A549 (cell line): ENCODE measurements at regions of chr20 and their contacts with region 1.

Region 1: GRCh38 chr20:31849455-31849925 is 4.1 kb upstream of the FOXS1 start:
- DNase-seq: no peak
- ATAC-seq: no peak
- H3K4me3 ChIP-seq: no peak overlapping the region
- H3K27ac ChIP-seq: no peak overlapping the region
- H3K4me1 ChIP-seq: peaks cover 17% of the 10 kb centered on the region
- CTCF ChIP-seq: no peak
- EP300 ChIP-seq: no peak
- POLR2A ChIP-seq: no peak
- RAD21 ChIP-seq: no peak

Region 2: DNA sequence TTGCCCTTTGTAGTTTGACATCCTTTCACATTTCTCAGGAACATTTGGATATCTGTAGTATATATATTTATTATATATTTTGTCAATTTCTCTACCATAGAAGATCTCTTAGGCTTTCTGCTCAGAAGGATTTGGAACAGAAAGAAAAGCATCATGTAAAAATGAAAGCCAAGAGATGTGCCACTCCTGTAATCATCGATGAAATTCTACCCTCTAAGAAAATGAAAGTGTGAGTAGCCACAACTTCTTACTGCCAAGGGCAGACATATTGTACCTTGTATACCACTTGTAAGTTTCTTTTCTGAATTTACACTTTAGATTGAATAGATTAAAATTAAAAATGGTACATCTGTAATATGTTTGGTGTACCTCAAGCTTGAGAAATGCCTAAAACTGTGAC is 79.2 kb before region 1 on chr20:
- CTCF ChIA-PET with region 1: no interaction called
- POLR2A ChIA-PET with region 1: no interaction called
- DNase-seq: no peak
- ATAC-seq: no peak
- H3K4me3 ChIP-seq: no peak overlapping the region
- H3K27ac ChIP-seq: no peak overlapping the region
- H3K4me1 ChIP-seq: no peaks in the 10 kb centered on the region
- CTCF ChIP-seq: no peak
- EP300 ChIP-seq: no peak
- POLR2A ChIP-seq: no peak
- RAD21 ChIP-seq: no peak

Region 3: GRCh38 chr20:31822421-31823330 is 26.8 kb before region 1 on chr20:
- CTCF ChIA-PET with region 1: interaction called, 125 read pairs
- POLR2A ChIA-PET with region 1: no interaction called
- DNase-seq: peak; percentile 62 to 79
- ATAC-seq: peak; percentile 71 to 90
- H3K4me3 ChIP-seq: 0 out of 3 replicates have a peak overlapping the region, but pooled peaks have one; percentile 18
- H3K27ac ChIP-seq: peak overlapping the region; percentile 16 to 68; a peak in 4 of 6 replicates
- H3K4me1 ChIP-seq: peaks cover 23% of the 10 kb centered on the region; the same call in 2 of the 3 replicates
- CTCF ChIP-seq: peak; percentile 97
- EP300 ChIP-seq: no peak
- POLR2A ChIP-seq: no peak
- RAD21 ChIP-seq: peak; percentile 97 to 99

Region 4: DNA sequence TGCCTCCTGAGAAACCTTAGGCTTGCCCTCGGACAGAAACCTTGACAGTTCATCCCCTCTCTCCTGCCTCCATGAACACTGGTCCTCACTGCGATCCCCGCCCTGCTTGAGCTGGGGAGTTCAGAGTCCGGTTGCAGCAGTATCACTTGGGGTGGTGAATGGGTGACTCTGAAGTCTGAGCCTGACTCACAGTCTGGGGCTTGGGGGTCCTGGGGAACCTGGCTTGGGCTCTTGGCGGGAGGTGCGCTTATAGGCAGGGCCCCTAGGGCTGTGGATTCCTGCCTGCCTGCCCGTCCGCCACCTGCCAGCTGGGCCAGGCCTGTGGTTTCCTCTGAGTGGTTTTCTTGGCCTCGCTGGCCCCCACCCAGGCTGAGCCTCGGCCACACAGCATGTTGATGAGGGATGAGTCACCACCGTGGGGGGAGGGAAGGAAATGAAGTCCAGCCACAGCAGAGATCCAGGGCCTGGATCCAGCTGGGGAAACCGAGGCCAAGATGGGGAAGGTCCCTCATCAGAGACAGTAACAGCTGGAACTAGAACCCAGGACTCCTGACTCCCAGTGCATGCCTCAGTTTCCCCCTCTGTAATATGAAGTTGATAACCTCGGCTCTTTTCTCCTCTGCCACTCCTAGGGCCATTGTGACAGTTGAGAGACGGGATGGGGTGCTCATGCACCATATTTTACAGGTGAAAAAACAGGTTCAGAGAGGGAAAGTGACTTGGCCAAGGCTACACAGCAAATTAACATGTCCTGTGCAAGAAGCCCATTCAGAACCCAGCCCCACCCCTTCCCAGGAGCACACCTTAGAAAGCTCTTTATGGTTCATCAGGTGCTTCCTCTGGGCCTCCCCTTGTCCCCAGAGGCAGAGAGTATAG is 13.3 kb before region 1 on chr20:
- CTCF ChIA-PET with region 1: interaction called, 145 read pairs
- POLR2A ChIA-PET with region 1: interaction called, 5 read pairs
- DNase-seq: peak; percentile 56 to 72
- ATAC-seq: peak; percentile 55 to 63
- H3K4me3 ChIP-seq: no peak overlapping the region
- H3K27ac ChIP-seq: peak overlapping the region; percentile 84 to 86
- H3K4me1 ChIP-seq: peaks cover 69% of the 10 kb centered on the region
- CTCF ChIP-seq: no peak
- EP300 ChIP-seq: peak; percentile 17 to 47; a peak in 2 of 5 replicates
- POLR2A ChIP-seq: no peak
- RAD21 ChIP-seq: no peak

Region 5: GRCh38 chr20:31869942-31870725 is 20.6 kb after region 1 on chr20 and contains the starts of genes DUSP15 and TTLL9:
- CTCF ChIA-PET with region 1: interaction called, 64 read pairs
- POLR2A ChIA-PET with region 1: no interaction called
- DNase-seq: no peak
- ATAC-seq: peak; percentile 66 to 83
- H3K4me3 ChIP-seq: peak within 1 kb of the TSS; percentile 70
- H3K27ac ChIP-seq: peak within 1 kb of the TSS; percentile 66 to 90
- H3K4me1 ChIP-seq: peaks cover 12% of the 10 kb centered on the region; the same call in 2 of the 3 replicates
- CTCF ChIP-seq: no peak
- EP300 ChIP-seq: no peak
- POLR2A ChIP-seq: no peak; the same call in 1 of the 2 replicates
- RAD21 ChIP-seq: no peak
- polyA plus RNA-seq, gene DUSP15: 0.46 and 0.53 TPM in 2 replicates
- polyA plus RNA-seq, gene TTLL9: 0.06 and 0.08 TPM in 2 replicates

Region 6: GRCh38 chr20:31951530-31952453 is 102.3 kb after region 1 on chr20 and contains the start of gene PDRG1:
- CTCF ChIA-PET with region 1: interaction called, 173 read pairs
- POLR2A ChIA-PET with region 1: interaction called, 4 read pairs
- DNase-seq: peak; percentile 72 to 96
- ATAC-seq: peak; percentile 89 to 99
- H3K4me3 ChIP-seq: peak within 1 kb of the TSS; percentile 100
- H3K27ac ChIP-seq: peak within 1 kb of the TSS; percentile 92 to 97
- H3K4me1 ChIP-seq: peaks cover 8% of the 10 kb centered on the region; the same call in 2 of the 3 replicates
- CTCF ChIP-seq: peak; percentile 96
- EP300 ChIP-seq: no peak
- POLR2A ChIP-seq: peak; percentile 85
- RAD21 ChIP-seq: peak; percentile 77 to 89
- polyA plus RNA-seq, gene PDRG1: 15.3 and 20.7 TPM in 2 replicates

Region 7: DNA sequence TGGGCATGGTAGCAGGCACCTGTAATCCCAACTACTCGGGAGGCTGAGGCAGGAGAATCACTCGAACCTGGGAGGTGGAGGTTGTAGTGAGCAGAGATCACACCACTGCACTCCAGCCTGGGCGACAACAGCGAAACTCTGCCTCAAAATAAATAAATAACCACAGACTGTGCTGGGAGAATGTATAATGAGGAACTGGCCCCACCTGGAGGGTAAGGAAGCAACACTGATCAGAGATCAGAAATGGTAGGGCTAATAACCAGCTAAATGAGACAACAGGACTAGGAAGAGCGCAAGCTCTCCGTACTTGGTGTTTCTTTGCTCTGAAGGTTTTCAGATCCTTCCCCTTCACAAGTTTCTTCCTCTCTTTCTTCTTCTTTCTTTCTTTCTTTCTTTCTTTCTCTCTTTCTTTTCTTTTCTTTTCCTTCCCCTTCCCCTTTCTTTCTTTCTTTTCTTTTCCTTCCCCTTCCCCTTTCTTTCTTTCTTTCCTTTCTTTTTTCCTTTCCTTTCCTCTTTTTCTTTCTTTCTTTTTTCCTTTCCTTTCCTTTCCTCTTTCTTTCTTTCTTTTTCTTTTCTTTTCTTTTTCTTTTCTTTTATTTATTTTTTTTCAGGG is 175.3 kb after region 1 on chr20:
- CTCF ChIA-PET with region 1: interaction called, 193 read pairs
- POLR2A ChIA-PET with region 1: no interaction called
- DNase-seq: no peak
- ATAC-seq: no peak
- H3K4me3 ChIP-seq: no peak overlapping the region
- H3K27ac ChIP-seq: no peak overlapping the region
- H3K4me1 ChIP-seq: no peaks in the 10 kb centered on the region
- CTCF ChIP-seq: no peak
- EP300 ChIP-seq: no peak
- POLR2A ChIP-seq: no peak
- RAD21 ChIP-seq: peak in 1 of 2 experiments; percentile 12; a peak in 1 of 5 replicates

Region 8: DNA sequence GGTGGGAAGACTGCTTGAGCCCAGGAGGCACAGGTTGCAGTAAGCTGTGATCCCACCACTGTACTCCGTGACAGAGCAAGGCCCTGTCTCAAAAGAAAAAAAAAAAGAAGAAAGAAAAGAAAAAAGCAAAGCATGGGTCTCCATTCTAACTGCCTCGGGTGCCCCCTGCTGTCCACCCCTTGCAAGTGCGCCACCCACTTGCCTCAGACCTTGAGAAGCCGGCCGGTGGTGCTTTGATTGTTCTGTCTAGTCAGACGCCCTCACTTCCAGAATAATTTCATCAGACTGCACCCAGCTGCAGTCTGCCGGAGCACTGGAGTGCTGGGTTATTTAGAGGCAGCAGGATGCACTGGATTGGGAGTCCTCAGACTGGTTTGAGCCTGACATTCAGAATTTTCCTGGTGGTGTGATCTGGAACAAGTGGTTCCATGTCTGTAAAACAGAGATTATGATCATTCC is 242.4 kb after region 1 on chr20:
- CTCF ChIA-PET with region 1: interaction called, 26 read pairs
- POLR2A ChIA-PET with region 1: no interaction called
- DNase-seq: peak; percentile 63 to 77
- ATAC-seq: peak; percentile 70 to 94
- H3K4me3 ChIP-seq: no peak overlapping the region
- H3K27ac ChIP-seq: 0 out of 6 replicates have a peak overlapping the region, but pooled peaks of 1 of the 2 experiments have one; percentile 20
- H3K4me1 ChIP-seq: no peaks in the 10 kb centered on the region
- CTCF ChIP-seq: peak; percentile 83
- EP300 ChIP-seq: no peak
- POLR2A ChIP-seq: no peak
- RAD21 ChIP-seq: peak; percentile 70 to 71